IMR-90 (cell line): ENCODE measurements at regions of chr14 and their contacts with region 1.

Region 1: DNA sequence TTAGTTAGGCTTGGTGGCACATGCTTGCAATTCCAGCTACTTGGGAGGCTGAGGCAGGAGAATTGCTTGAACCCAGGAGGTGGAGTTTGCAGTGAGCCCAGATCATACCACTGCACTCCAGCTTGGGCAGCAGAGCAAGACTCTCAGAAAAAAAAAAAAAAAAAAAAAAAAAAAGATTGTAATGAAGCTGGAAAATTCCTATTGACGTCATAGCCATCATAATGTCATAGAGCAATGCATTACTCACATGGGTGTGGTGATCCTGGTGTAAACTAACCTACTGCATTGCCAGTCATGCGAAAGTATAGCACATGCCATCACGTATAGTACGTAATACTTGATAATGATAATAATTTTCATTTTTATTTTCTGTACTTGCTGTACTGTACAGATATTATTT is 42.7 kb upstream of the NID2 start:
- DNase-seq: peak; percentile 87
- ATAC-seq: no peak
- H3K4me3 ChIP-seq: no peak overlapping the region
- H3K27ac ChIP-seq: peak overlapping the region; percentile 99
- H3K4me1 ChIP-seq: peaks cover 35% of the 10 kb centered on the region
- H3K27me3 ChIP-seq: no peaks in the 10 kb centered on the region
- CTCF ChIP-seq: no peak
- POLR2A ChIP-seq: no peak
- RAD21 ChIP-seq: no peak

Region 2: GRCh38 chr14:52080817-52081755 is 30.5 kb before region 1 on chr14:
- CTCF ChIA-PET with region 1: interaction called, 4 read pairs
- POLR2A ChIA-PET with region 1: interaction called, 5 read pairs
- dilution Hi-C with region 1: no loop called
- in situ Hi-C with region 1: no loop called
- intact Hi-C with region 1: loop called (anchors 2 kb)
- DNase-seq: peak; percentile 96
- ATAC-seq: peak; percentile 80
- H3K4me3 ChIP-seq: no peak overlapping the region
- H3K27ac ChIP-seq: peak overlapping the region; percentile 34
- H3K4me1 ChIP-seq: peaks cover 32% of the 10 kb centered on the region
- H3K27me3 ChIP-seq: no peaks in the 10 kb centered on the region
- CTCF ChIP-seq: no peak
- POLR2A ChIP-seq: peak; percentile 79
- RAD21 ChIP-seq: peak; percentile 14; the same call in 1 of the 2 replicates